ENCODE measurements at regions of chr16 and their contacts with region 1.

Region 1: GRCh38 chr16:50763211-50763610 is 21.3 kb downstream of the CYLD start:
- DNase-seq: no peak
- H3K4me3 Mint-ChIP-seq: no peak overlapping the region
- H3K27ac Mint-ChIP-seq: peak overlapping the region; percentile 13
- H3K4me1 Mint-ChIP-seq: peaks cover 84% of the 10 kb centered on the region
- H3K27me3 Mint-ChIP-seq: no peaks in the 10 kb centered on the region

Region 2: GRCh38 chr16:50776037-50776436 is 12.8 kb after region 1 on chr16:
- intact Hi-C with region 1: loop called (anchors 2 kb)
- DNase-seq: no peak
- H3K4me3 Mint-ChIP-seq: no peak overlapping the region
- H3K27ac Mint-ChIP-seq: no peak overlapping the region
- H3K4me1 Mint-ChIP-seq: peaks cover 55% of the 10 kb centered on the region
- H3K27me3 Mint-ChIP-seq: no peaks in the 10 kb centered on the region